HCT116 (cell line): ENCODE measurements at regions of chr4 and their contacts with region 1.

Region 1: GRCh38 chr4:79150820-79151416 is 174.9 kb downstream of the NAA11 start:
- DNase-seq: no peak
- ATAC-seq: no peak
- H3K4me3 ChIP-seq: no peak overlapping the region
- H3K27ac ChIP-seq: no peak overlapping the region
- H3K4me1 ChIP-seq: no peaks in the 10 kb centered on the region
- H3K27me3 ChIP-seq: no peaks in the 10 kb centered on the region
- CTCF ChIP-seq: no peak
- POLR2A ChIP-seq: no peak
- RAD21 ChIP-seq: no peak

Region 2: GRCh38 chr4:79217025-79217424 is 66.1 kb after region 1 on chr4:
- CTCF ChIA-PET with region 1: no interaction called
- POLR2A ChIA-PET with region 1: no interaction called
- RAD21 ChIA-PET with region 1: no interaction called
- intact Hi-C with region 1: loop called (anchors 2 kb)
- DNase-seq: no peak
- ATAC-seq: no peak
- H3K4me3 ChIP-seq: no peak overlapping the region
- H3K27ac ChIP-seq: no peak overlapping the region
- H3K4me1 ChIP-seq: no peaks in the 10 kb centered on the region
- H3K27me3 ChIP-seq: no peaks in the 10 kb centered on the region
- CTCF ChIP-seq: no peak
- POLR2A ChIP-seq: no peak
- RAD21 ChIP-seq: no peak